ENCODE measurements at regions of chr11 and their contacts with region 1.

Region 1: DNA sequence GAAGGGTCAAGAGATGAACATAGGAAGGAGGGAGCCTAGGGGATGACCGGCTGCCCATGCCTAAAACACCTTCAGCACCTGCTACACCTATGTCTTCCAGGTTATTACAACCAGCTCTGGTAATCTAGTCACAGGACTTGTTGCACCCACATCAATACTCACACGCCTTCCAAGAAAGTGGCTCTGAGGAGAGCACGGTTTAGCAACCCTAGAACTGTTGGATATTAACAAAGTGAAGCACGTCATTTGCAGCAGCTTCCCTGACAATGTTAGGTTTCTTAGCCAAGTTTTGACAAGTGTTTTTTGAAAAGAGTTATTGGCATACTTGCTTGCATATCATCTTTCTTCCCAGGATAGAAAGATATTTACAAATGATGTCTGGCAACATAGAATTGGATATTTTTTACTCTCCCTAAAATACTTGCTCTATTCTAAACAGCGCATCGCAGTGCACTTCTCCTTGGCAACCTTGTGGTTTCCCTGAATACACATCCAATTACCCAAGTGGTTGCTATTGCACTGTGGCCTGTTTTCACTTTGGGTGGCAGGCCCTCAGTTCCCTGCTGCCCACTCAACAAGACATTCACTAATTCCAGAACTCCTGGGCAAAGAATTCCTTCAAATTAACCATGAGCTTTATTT is 94.3 kb upstream of the ARHGAP42 start:
- DNase-seq: no peak
- ATAC-seq: no peak
- H3K4me3 ChIP-seq: no peak overlapping the region
- H3K4me1 ChIP-seq: peaks cover 3% of the 10 kb centered on the region
- CTCF ChIP-seq: no peak

Region 2: GRCh38 chr11:100640646-100641045 is 47.9 kb after region 1 on chr11:
- intact Hi-C with region 1: loop called in 1 of 2 experiments (anchors 10 kb)
- DNase-seq: no peak
- ATAC-seq: no peak
- H3K4me3 ChIP-seq: no peak overlapping the region
- H3K4me1 ChIP-seq: no peaks in the 10 kb centered on the region
- CTCF ChIP-seq: no peak

Measured in mucosa of descending colon (tissue), 3 donors.